Activated B cell treated with CpG ODN at 0.5 μM for 24 hours (primary cell): ENCODE measurements at regions of chr7 and their contacts with region 1.

Region 1: GRCh38 chr7:140358412-140359051 is 39.8 kb downstream of the SLC37A3 start:
- DNase-seq: no peak
- ATAC-seq: peak; percentile 38
- H3K4me3 Mint-ChIP-seq: peak overlapping the region; percentile 86
- H3K27ac Mint-ChIP-seq: no peak overlapping the region
- H3K4me1 Mint-ChIP-seq: peaks cover 15% of the 10 kb centered on the region
- H3K27me3 Mint-ChIP-seq: no peaks in the 10 kb centered on the region
- CTCF ChIP-seq: no peak

Region 2: DNA sequence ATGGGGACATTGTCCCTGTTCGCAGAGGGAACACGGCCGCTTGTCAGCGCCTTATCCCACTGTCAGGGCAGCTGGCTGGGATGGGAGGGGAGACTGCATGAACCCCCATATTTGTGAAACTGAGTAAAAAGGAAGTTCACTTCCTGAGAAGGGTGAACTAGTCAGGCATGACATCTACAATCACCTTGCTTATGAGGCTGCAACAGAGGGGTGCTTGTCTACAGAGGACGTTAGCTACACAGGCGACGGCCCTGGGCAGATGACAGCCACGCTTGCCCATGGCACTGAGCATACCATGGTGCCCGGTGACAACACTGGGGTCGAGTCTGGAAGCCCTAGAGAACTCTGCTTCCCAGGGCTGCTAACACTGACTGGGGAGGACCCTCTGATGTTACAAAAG is 135.7 kb before region 1 on chr7:
- CTCF ChIA-PET with region 1: no interaction called
- POLR2A ChIA-PET with region 1: interaction called, 14 read pairs
- intact Hi-C with region 1: no loop called
- DNase-seq: no peak
- ATAC-seq: peak; percentile 89
- H3K4me3 Mint-ChIP-seq: peak overlapping the region; percentile 33
- H3K27ac Mint-ChIP-seq: peak overlapping the region; percentile 11
- H3K4me1 Mint-ChIP-seq: peaks cover 53% of the 10 kb centered on the region
- H3K27me3 Mint-ChIP-seq: no peaks in the 10 kb centered on the region
- CTCF ChIP-seq: no peak